ENCODE measurements at regions of chr12 and their contacts with region 1.

Region 1: DNA sequence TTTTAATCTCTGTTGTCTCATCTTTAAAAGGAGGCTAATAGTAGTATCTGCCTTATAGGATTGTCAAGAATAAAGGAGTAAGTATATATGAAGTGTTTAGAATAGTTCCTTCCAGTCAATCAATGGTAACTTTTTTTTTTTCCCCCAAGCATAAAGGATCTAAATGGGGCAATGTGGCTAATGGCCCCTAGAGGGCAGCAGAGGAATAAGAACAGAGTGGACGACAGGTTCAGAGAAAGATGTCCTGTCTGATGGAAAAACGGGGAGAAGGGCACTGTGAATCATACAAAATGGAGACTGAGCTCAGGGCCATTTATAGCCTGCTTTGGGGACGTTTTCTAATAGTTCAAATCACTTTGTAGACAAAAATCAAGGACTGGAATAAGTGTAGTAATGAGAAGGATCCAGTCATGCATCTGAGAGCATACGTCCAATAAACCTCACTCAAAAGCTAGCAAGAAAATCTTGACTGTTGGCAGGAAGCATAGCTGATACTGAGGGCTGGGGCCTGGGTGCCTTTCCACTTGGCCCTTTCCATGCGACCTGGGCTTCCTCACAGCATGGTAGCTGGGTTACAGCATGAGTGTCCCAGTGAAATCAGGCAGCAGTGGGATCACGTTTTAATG is 51.3 kb downstream of the IFNG-AS1 start:
- DNase-seq: peak; percentile 71
- H3K4me3 Mint-ChIP-seq: no peak overlapping the region
- H3K27ac Mint-ChIP-seq: peak overlapping the region; percentile 66
- H3K4me1 Mint-ChIP-seq: peaks cover 51% of the 10 kb centered on the region
- H3K27me3 Mint-ChIP-seq: no peaks in the 10 kb centered on the region

Region 2: DNA sequence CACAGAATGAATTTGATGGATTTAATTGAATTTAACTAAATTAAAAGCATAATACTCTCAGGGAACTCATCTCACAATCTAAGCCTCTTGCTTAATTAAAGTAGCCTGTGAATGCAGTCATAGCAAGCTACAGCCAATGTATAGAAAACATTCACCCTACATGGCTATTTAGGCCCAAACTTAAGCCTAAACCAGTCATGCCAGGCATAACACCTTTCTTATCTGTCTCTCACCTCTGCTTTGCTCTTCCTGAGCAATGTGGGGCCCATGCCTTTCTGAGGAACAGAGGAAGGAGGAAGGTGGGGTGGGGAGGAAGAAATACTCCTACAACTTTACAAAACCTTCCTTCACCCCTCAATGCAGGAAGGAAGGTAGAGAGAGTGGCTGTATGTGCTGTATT is 22.2 kb before region 1 on chr12:
- CTCF ChIA-PET with region 1: interaction called, 12 read pairs
- POLR2A ChIA-PET with region 1: no interaction called
- intact Hi-C with region 1: no loop called
- DNase-seq: no peak
- H3K4me3 Mint-ChIP-seq: no peak overlapping the region
- H3K27ac Mint-ChIP-seq: peak overlapping the region; percentile 52
- H3K4me1 Mint-ChIP-seq: peaks cover 15% of the 10 kb centered on the region
- H3K27me3 Mint-ChIP-seq: no peaks in the 10 kb centered on the region

Region 3: DNA sequence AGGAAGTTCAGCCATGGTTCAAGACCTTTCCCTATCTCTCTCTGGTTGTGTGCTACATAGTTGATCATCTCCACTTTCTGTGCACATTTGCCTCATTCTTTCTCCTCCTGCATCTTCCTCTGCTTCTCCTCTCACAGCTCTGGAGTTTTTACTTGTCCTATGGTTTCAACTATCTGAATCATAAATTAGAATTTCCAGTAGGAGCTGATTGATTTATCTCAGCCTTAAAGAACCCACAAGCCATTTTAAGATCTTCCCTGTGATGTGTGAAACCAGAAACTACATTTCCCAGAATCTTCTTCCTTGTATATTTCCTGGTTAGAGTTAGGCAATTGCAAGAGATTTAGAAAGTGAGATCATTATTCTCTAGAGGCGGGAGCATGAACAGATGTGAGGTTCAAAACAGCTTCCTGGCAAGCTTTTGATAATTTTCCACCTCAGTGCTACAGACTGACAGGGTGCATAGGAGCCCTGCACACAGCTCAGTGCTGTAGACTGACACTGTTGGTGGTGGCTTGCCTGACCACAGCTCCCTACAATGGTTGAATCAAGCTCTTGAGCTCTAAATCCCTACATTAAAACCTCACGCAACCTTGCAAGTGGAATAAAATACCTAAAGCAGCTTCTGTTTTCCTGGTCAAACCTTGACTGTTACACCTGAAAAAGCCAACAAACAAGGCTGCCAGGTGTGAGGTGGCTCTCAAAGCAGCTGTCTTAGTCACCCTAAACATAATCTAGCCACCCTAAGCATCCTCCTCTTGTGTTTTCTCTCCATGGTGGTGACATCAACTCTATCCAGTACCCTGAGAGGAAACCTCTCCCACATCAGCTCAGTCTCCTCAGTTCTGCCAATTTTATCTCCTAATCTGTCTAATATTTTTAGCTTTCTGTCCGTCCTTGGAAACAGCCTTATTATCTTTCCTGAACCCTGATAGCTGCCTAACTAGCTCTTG is 140.5 kb after region 1 on chr12:
- CTCF ChIA-PET with region 1: interaction called, 21 read pairs
- POLR2A ChIA-PET with region 1: no interaction called
- intact Hi-C with region 1: no loop called
- DNase-seq: peak; percentile 63
- H3K4me3 Mint-ChIP-seq: no peak overlapping the region
- H3K27ac Mint-ChIP-seq: peak overlapping the region; percentile 78
- H3K4me1 Mint-ChIP-seq: peaks cover 54% of the 10 kb centered on the region
- H3K27me3 Mint-ChIP-seq: no peaks in the 10 kb centered on the region

Region 4: DNA sequence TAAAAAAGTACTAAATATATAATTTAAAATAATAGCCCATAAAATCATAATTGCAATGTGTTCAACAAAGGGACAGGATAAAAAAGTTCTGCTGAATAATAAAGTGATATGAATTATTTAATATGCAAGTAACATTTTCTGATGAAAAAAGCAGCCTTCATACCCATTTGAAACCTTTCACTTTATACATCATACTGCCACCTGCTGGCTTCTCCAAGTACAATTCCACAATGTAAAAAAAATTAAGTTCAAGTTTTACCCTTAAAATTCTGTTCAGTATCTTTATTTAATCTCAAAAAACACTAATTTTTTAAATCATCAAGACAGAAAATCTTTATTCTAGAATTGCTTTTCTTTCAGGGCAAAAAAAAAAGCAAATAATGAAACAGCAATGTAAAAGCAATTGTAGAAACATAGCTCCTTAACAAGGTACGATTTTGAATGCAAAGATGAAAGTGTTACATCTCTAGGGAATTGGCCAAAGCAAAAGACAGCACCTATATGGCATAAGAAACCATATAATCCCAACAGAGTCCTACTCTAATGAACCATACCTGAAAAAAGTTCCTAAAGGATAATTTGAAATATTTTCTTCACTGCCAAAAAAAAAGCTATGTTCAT is 276.6 kb after region 1 on chr12:
- CTCF ChIA-PET with region 1: interaction called, 32 read pairs
- POLR2A ChIA-PET with region 1: no interaction called
- intact Hi-C with region 1: loop called (anchors 1 kb)
- DNase-seq: peak; percentile 37
- H3K4me3 Mint-ChIP-seq: no peak overlapping the region
- H3K27ac Mint-ChIP-seq: no peak overlapping the region
- H3K4me1 Mint-ChIP-seq: no peaks in the 10 kb centered on the region
- H3K27me3 Mint-ChIP-seq: no peaks in the 10 kb centered on the region

Region 5: DNA sequence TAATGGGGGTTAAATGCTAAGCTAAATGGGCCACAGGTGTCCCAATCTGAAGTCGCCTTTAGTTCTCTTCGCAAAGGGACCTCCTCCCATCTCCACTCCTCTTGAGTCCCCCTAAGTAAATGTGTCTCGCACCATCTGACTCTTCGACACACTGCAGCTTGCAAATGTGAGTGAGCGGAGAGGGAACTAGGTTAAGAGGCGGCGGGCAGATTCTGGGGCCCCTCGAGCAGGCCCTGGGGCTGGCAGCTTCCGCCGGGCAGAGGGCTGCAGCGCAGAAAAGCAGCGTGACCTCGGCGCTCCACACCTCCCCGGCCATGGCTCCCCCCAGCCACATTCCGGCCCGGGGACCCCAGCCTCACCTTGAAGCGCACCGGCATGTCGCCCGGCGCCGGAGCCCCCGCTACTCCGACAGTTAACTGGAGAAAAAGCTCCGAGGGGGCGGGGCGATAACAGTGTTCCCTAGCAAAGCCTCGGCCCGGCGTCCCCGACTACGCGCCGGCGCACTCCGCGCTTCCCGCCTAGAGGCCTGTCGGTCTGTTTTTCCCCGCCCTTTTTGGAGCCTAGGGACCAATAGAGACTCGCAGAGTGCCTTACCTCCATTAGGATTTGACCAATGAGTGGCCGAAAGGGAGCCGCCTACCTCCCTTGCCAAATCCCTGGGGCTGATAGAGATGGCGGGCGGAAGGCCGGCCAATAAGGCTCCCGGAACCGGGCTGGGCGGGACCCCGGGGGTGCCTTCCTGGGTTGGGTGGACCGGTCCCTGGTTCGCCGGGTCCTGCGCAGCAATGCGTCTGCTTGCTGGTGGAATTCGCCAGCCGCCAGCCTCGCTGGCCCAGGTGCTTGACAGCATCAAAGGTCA is 291.5 kb after region 1 on chr12 and contains the start of gene MDM1:
- CTCF ChIA-PET with region 1: interaction called, 10 read pairs
- POLR2A ChIA-PET with region 1: no interaction called
- intact Hi-C with region 1: loop called (anchors 5 kb)
- DNase-seq: peak; percentile 97
- H3K4me3 Mint-ChIP-seq: peak within 1 kb of the TSS; percentile 85
- H3K27ac Mint-ChIP-seq: peak within 1 kb of the TSS; percentile 71
- H3K4me1 Mint-ChIP-seq: peaks cover 31% of the 10 kb centered on the region
- H3K27me3 Mint-ChIP-seq: peaks cover 2% of the 10 kb centered on the region
- total RNA-seq, gene MDM1: 13.8 to 15.6 TPM